PC-9 (cell line): ENCODE measurements at regions of chr9 and their contacts with region 1.

Region 1: DNA sequence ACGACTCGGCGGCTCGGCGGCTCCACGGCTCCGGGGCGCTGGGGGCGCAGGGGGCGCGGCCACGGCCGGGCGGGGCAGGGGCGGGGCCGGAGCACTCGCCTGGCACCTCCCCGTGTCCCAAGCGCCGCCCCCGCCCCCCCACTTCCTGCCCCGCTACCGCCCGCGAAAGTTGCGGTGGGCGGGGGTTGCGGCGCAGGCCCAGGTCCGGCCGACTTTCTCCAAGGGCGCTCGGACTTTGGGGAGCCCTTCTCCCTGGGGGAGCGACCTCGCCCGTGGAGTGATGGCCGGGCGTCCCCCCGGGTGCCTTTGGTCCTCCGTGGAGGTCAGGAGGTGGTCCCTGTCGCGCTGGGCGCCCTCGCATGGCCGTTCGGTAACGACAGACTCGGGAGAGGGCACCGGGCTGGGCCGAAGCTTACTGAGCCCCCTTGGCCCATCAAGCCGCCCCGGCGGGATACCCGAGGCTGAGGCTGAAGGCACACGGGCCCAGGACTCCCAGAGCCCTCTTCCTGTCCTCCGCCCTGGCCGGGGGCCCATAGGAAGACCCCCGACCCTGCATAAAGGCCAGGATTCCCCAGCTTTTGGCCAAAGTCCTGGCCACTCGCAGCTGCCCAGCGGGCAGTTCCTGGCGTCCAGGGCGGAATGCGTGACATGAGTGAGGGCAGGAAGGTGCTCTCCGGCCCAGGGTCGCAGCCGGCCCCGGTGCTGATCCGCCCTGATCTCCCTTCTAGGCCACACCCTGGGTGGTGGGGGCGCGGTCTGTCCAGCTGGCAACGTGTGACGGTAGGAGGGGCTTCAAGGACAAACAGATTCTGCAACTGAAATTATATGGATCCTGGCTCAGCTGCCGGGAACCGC is 883 bp upstream of the VAV2 start:
- DNase-seq: peak; percentile 66 to 82
- H3K4me3 ChIP-seq: peak overlapping the region; percentile 98
- H3K27ac ChIP-seq: peak overlapping the region; percentile 65
- H3K4me1 ChIP-seq: peaks cover 17% of the 10 kb centered on the region
- H3K27me3 ChIP-seq: no peaks in the 10 kb centered on the region
- CTCF ChIP-seq: peak; percentile 63

Region 2: DNA sequence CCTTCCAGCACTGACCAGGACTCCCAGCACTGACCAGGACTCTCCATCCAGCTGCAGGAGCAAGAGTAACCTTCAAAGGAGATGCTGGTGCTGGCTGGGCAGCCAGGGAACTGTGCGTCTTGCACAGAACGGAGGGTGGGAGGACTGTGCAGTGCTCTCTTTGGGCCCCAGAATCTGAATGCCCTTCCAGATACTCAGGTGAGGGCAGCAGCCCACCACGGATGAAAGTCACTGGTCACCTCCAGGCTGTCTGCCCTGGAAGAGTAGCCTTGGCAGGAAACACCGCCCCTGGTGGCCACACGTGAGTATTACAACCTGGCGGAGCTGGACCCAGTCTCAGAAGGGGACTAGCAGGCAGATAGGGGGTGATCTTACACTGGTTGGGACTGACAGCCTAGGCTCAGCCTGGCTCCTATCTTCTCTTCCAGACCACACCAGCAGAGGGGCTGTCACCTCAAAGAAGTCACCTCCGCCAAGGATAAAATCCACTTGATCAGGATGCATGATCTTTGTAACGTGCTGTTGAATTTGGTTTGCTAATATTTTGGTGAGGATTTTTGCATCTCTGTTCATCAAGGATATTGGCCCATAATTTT is 250.1 kb before region 1 on chr9:
- CTCF ChIA-PET with region 1: interaction called, 3 read pairs
- POLR2A ChIA-PET with region 1: no interaction called
- intact Hi-C with region 1: loop called (anchors 1 kb)
- DNase-seq: peak; percentile 40 to 88
- H3K4me3 ChIP-seq: no peak overlapping the region
- H3K27ac ChIP-seq: no peak overlapping the region
- H3K4me1 ChIP-seq: no peaks in the 10 kb centered on the region
- H3K27me3 ChIP-seq: peaks cover 42% of the 10 kb centered on the region
- CTCF ChIP-seq: peak; percentile 99

Region 3: DNA sequence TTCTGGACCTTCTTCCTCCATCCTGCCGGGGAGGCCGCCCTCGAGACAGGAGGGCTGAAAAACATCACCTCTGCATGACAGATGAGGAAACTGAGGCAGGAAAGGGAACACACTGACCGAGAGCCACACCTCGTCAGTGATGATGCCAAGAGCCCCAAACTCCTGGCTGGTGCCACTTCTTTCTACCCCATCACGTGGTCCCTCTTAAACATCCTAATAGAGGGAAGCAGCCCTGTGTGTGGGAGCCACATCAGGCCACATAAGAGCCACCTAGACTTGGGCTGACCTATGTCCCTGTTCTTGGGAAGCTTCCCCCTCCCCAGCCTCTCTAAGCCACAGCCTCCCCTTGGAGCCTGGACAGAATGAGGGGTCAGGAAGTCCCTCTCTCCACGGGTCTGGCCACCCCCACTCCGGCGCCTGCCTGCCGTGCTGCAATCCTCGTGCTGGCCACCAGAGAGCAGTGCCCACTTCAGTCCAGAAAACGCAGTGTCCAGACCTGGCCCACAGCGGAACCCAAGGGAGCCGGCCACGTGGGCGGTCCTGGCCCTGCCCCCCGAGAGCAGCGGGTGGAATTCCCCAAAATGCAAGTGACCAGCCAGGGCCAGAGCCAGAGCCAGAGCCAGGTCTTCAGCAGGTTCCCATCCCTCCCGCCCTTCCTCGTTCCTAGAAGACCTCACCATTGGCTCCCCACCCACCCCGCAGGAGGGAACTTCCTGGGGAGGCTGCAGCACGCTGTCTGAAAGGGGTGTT is 200.1 kb before region 1 on chr9:
- CTCF ChIA-PET with region 1: interaction called, 4 read pairs
- POLR2A ChIA-PET with region 1: interaction called, 3 read pairs
- intact Hi-C with region 1: loop called (anchors 1 kb)
- DNase-seq: peak; percentile 36 to 74
- H3K4me3 ChIP-seq: no peak overlapping the region
- H3K27ac ChIP-seq: no peak overlapping the region
- H3K4me1 ChIP-seq: no peaks in the 10 kb centered on the region
- H3K27me3 ChIP-seq: no peaks in the 10 kb centered on the region
- CTCF ChIP-seq: peak; percentile 95

Region 4: DNA sequence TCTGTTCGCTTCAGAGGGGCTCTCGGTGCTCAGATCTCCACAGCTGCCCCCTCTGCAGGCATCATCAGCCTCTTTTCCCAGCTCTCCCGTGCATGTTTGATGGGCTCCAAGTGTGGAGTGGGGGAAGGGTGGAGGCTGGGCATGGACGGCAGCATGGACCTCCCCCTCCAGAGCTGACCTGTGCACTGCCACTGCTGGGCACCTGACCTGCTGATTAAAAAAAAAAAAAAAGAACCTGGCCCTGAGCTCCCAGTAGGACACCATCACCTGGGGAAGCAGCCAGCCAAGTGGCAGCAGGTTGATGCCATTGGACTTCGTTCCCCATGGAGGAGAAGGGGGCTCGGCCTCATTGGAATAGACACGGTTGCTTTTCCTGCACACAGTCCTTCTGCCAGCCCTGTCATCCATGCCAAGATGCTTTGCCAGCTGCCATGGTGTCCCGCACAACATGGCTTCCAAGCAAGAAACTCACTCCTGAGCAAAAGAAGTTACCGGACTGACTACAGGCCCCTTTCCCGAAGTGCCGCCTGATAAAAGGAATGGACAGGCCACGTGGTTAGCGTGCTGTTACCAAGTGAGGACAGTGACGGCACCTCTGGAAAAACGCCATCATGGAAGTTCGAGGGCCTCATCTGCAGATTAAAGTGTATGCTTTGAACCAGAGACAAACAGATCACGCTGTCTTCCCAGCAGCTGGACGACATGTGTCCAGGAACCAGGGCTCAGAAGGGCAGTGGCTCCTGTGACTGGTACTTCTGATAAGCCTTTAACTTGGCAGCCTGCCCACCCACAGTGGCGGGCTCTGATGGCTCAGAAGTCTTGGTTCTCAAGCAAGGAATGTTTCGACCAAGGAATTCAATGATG is 17.5 kb after region 1 on chr9:
- CTCF ChIA-PET with region 1: interaction called, 21 read pairs
- POLR2A ChIA-PET with region 1: no interaction called
- intact Hi-C with region 1: no loop called
- DNase-seq: peak in 1 of 2 experiments; percentile 33
- H3K4me3 ChIP-seq: no peak overlapping the region
- H3K27ac ChIP-seq: no peak overlapping the region
- H3K4me1 ChIP-seq: peaks cover 10% of the 10 kb centered on the region
- H3K27me3 ChIP-seq: peaks cover 3% of the 10 kb centered on the region; the same call in 1 of the 2 replicates
- CTCF ChIP-seq: no peak

Region 5: DNA sequence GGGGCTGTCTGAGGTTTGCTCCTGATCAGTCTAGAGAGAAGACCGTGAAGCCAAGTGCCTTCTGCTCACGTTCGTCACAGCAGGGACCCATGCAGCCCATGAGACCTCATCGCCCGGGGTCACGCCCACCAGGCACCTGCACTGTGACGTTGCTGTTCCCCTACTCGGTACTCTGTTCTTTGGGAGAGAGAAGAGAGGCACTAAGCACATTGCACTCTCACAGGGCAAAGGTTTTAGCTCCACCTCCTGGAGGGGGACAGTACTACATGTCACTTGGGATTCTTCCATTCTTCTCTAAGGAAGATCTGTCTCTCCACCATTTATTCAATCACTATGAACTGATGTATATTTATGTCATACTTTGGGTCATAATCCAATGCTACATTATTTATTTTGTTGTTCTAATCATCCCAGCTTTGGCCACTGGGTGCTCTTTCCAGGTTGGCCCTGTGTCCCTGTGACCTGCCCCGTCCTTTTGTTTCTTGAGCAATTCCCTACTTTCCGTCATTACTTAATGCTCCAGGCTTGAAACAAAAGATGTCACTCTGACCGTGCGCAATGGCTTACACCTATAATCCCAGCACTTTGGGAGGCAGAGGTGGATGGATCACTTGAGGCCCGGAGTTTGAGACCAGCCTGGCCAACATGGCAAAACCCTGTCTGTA is 106.2 kb after region 1 on chr9:
- CTCF ChIA-PET with region 1: interaction called, 3 read pairs
- POLR2A ChIA-PET with region 1: no interaction called
- intact Hi-C with region 1: loop called (anchors 1 kb)
- DNase-seq: peak; percentile 61 to 66
- H3K4me3 ChIP-seq: no peak overlapping the region
- H3K27ac ChIP-seq: no peak overlapping the region
- H3K4me1 ChIP-seq: no peaks in the 10 kb centered on the region
- H3K27me3 ChIP-seq: peaks cover 79% of the 10 kb centered on the region
- CTCF ChIP-seq: peak; percentile 91